ENCODE measurements at regions of chr5 and their contacts with region 1.

Region 1: GRCh38 chr5:50440651-50441492 is at the start of gene EMB:
- DNase-seq: no peak
- ATAC-seq: peak; percentile 76
- H3K4me3 ChIP-seq: peak within 1 kb of the TSS; percentile 67
- H3K27ac ChIP-seq: peak within 1 kb of the TSS; percentile 14; the same call in 1 of the 2 replicates
- H3K4me1 ChIP-seq: peaks cover 7% of the 10 kb centered on the region; the same call in 1 of the 2 replicates
- H3K27me3 ChIP-seq: no peaks in the 10 kb centered on the region
- CTCF ChIP-seq: peak; percentile 41 to 55 (median 48)
- EP300 ChIP-seq: no peak
- POLR2A ChIP-seq: peak; percentile 74
- RAD21 ChIP-seq: peak; percentile 41
- polyA plus RNA-seq, gene EMB: 7.0 to 13.5 TPM

Region 2: DNA sequence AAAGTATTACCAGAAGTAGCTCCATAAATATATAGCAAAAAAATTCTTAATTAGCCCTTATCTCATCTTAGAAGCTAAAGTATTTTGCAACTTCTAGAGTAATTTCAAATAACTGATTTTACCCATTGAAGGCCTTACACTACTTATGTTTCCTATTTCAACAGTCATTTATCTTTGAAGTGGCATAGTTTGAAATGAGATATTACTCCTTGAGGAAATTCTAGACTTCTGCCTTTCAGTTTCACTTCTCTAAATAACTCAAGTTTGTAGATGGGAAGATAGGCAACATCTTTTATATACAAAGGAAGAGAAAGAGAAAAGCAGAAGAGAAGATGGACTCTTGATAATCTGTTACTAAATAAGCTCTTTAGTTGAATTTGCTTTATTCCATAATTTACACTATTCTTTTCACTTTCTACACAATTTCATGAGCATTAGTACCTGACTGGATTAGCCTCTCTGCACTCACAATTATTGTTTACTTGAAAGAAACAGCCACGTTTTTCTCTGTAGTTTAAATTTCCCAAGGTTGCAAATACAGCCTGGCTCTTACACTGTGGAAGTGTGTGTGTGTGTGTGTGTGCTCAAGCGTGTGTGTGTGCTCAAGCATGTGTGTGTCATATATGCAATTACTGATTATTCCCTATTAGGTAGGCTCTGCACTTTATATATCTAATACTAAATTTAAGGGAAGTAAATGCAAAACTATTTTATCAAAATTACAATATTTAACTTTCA is 60.8 kb after region 1 on chr5:
- CTCF ChIA-PET with region 1: interaction called, 3 read pairs
- POLR2A ChIA-PET with region 1: interaction called, 7 read pairs
- RAD21 ChIA-PET with region 1: interaction called, 4 read pairs
- SMC1A ChIA-PET with region 1: interaction called, 7 read pairs
- in situ Hi-C with region 1: no loop called
- intact Hi-C with region 1: loop called (anchors 1 kb)
- DNase-seq: peak; percentile 33
- ATAC-seq: peak; percentile 98
- H3K4me3 ChIP-seq: no peak overlapping the region
- H3K27ac ChIP-seq: no peak overlapping the region
- H3K4me1 ChIP-seq: no peaks in the 10 kb centered on the region; the same call in 1 of the 2 replicates
- H3K27me3 ChIP-seq: no peaks in the 10 kb centered on the region
- CTCF ChIP-seq: no peak
- EP300 ChIP-seq: peak; percentile 27 to 84; a peak in 2 of 4 replicates
- POLR2A ChIP-seq: no peak
- RAD21 ChIP-seq: no peak

Region 3: GRCh38 chr5:50595199-50595598 is 154.3 kb after region 1 on chr5:
- CTCF ChIA-PET with region 1: no interaction called
- POLR2A ChIA-PET with region 1: no interaction called
- RAD21 ChIA-PET with region 1: no interaction called
- SMC1A ChIA-PET with region 1: no interaction called
- in situ Hi-C with region 1: no loop called
- intact Hi-C with region 1: loop called (anchors 10 kb)
- DNase-seq: no peak
- ATAC-seq: no peak
- H3K4me3 ChIP-seq: no peak overlapping the region
- H3K27ac ChIP-seq: no peak overlapping the region
- H3K4me1 ChIP-seq: no peaks in the 10 kb centered on the region
- H3K27me3 ChIP-seq: no peaks in the 10 kb centered on the region
- CTCF ChIP-seq: no peak
- EP300 ChIP-seq: no peak
- POLR2A ChIP-seq: no peak
- RAD21 ChIP-seq: no peak

Region 4: DNA sequence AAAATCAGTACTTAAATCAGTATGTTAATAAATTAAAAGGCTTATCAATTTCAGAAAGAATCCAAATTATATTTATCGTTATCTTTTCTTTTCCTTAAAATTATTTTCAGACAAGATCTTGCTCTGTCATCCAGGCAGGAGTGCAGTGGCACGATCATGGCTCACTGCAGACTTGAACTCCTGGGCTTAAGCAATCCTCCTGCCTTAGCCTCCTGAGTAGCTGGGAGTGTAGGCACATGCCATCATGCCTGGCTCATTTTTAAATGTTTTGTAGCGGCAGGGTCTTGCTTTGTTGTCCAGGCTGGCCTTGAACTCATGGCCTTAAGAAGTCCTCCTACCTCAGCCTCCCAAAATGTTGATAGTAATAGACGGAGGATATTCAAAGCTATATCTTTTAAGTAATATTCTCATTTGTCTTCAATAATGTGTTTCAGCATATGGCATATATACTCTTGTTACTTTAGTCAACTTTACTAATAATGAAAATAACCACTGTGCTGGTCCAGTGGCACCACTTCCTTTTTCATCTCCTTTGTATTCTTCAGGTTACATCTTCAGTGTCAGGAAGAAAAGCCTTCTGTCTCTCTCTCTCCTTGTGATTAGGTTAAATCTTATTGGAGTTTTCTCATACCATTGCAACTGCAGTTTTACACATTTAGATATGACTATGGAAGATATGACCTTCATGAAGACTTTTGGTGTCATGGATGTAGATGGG is 256.7 kb after region 1 on chr5:
- CTCF ChIA-PET with region 1: no interaction called
- POLR2A ChIA-PET with region 1: no interaction called
- RAD21 ChIA-PET with region 1: no interaction called
- SMC1A ChIA-PET with region 1: no interaction called
- in situ Hi-C with region 1: no loop called
- intact Hi-C with region 1: loop called (anchors 10 kb)
- DNase-seq: peak; percentile 46
- ATAC-seq: peak; percentile 86
- H3K4me3 ChIP-seq: no peak overlapping the region
- H3K27ac ChIP-seq: no peak overlapping the region; the same call in 1 of the 2 replicates
- H3K4me1 ChIP-seq: peaks cover 11% of the 10 kb centered on the region
- H3K27me3 ChIP-seq: no peaks in the 10 kb centered on the region
- CTCF ChIP-seq: no peak
- EP300 ChIP-seq: peak in 1 of 2 experiments; percentile 61; a peak in 1 of 4 replicates
- POLR2A ChIP-seq: no peak
- RAD21 ChIP-seq: no peak

Region 5: GRCh38 chr5:50751064-50751657 is 310.3 kb after region 1 on chr5:
- CTCF ChIA-PET with region 1: interaction called, 8 read pairs
- POLR2A ChIA-PET with region 1: interaction called, 3 read pairs
- RAD21 ChIA-PET with region 1: interaction called, 3 read pairs
- SMC1A ChIA-PET with region 1: no interaction called
- in situ Hi-C with region 1: no loop called
- intact Hi-C with region 1: loop called (anchors 5 kb)
- DNase-seq: peak; percentile 27
- ATAC-seq: peak; percentile 97
- H3K4me3 ChIP-seq: no peak overlapping the region
- H3K27ac ChIP-seq: no peak overlapping the region
- H3K4me1 ChIP-seq: no peaks in the 10 kb centered on the region
- H3K27me3 ChIP-seq: no peaks in the 10 kb centered on the region
- CTCF ChIP-seq: peak; percentile 77 to 88 (median 78); a peak in 5 of 6 replicates
- EP300 ChIP-seq: no peak
- POLR2A ChIP-seq: no peak
- RAD21 ChIP-seq: peak; percentile 98

Region 6: DNA sequence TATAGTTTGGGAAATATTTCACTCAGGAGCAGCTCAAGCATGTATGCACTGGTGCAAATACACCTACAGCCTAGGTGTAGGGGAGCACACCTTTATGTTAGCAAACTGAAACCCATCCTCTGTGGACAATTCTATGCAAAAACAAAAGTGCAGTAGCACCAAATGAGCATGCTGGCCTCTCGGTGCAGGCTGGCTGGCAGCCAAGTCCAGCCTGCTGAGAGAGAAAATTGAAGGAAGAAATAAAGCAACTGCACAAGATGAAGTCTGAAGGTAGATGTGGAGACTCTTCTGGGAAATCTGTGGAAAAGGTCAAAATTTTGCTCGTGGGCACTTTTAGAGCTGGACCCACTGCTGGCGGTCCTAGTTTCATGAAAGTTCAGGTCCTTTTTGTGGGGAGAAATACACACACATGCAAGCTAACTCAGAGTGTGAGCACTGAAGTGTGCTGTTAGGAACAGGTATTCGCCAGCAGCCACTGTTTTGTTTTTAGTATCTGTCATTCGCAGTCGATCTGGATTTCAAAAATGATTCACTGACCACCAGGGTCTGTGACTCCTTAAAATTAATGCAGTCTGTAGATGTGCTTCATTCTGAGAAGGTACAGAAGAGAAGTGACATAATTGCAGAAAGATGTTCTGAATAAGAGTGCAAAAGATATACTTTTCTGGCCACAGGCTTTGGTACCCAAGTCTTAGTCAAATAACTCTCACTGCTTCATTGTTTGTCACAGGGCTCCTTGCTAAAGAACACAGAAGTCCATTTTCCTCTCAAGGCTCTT is 507.2 kb after region 1 on chr5:
- CTCF ChIA-PET with region 1: no interaction called
- POLR2A ChIA-PET with region 1: no interaction called
- RAD21 ChIA-PET with region 1: no interaction called
- SMC1A ChIA-PET with region 1: no interaction called
- in situ Hi-C with region 1: no loop called
- intact Hi-C with region 1: no loop called
- DNase-seq: no peak
- ATAC-seq: no peak
- H3K4me3 ChIP-seq: no peak overlapping the region
- H3K27ac ChIP-seq: no peak overlapping the region
- H3K4me1 ChIP-seq: no peaks in the 10 kb centered on the region
- H3K27me3 ChIP-seq: no peaks in the 10 kb centered on the region
- CTCF ChIP-seq: no peak
- EP300 ChIP-seq: no peak
- POLR2A ChIP-seq: no peak
- RAD21 ChIP-seq: no peak

Measured in GM12878 (cell line).